ENCODE measurements at regions of chr12 and their contacts with region 1.

Region 1: GRCh38 chr12:93677195-93678064 is at the start of gene CRADD:
- DNase-seq: peak; percentile 75 to 97 (median 95)
- ATAC-seq: peak; percentile 95
- H3K4me3 ChIP-seq: peak within 1 kb of the TSS; percentile 93
- H3K4me3 Mint-ChIP-seq: peak within 1 kb of the TSS; percentile 82 to 100 (median 98)
- H3K27ac ChIP-seq: peak within 1 kb of the TSS; percentile 99
- H3K27ac Mint-ChIP-seq: peak within 1 kb of the TSS; percentile 97 to 100 (median 100)
- H3K4me1 ChIP-seq: peaks cover 5 to 9% of the 10 kb centered on the region in 2 donors
- H3K4me1 Mint-ChIP-seq: peaks cover 19 to 56% (median 41%) of the 10 kb centered on the region in 7 donors
- H3K27me3 ChIP-seq: no peaks in the 10 kb centered on the region
- H3K27me3 Mint-ChIP-seq: peaks cover 2 to 13% (median 9%) of the 10 kb centered on the region in 5 donors
- total RNA-seq, gene CRADD: 11.4 to 17.1 (median 13.8) TPM

Region 2: GRCh38 chr12:93441617-93442410 is 235.6 kb before region 1 on chr12 and contains the start of gene UBE2N:
- CTCF ChIA-PET with region 1: no interaction called
- POLR2A ChIA-PET with region 1: interaction called, 4 read pairs
- intact Hi-C with region 1: loop called (anchors 1 kb)
- DNase-seq: peak; percentile 96 to 98 (median 97)
- ATAC-seq: peak; percentile 95
- H3K4me3 ChIP-seq: peak within 1 kb of the TSS; percentile 66
- H3K4me3 Mint-ChIP-seq: peak within 1 kb of the TSS; percentile 89 to 100 (median 97)
- H3K27ac ChIP-seq: peak within 1 kb of the TSS; percentile 98
- H3K27ac Mint-ChIP-seq: peak within 1 kb of the TSS; percentile 96 to 100 (median 98)
- H3K4me1 ChIP-seq: peaks cover 35 to 48% of the 10 kb centered on the region in 2 donors
- H3K4me1 Mint-ChIP-seq: peaks cover 44 to 54% (median 49%) of the 10 kb centered on the region in 7 donors
- H3K27me3 ChIP-seq: no peaks in the 10 kb centered on the region
- H3K27me3 Mint-ChIP-seq: no peaks in the 10 kb centered on the region
- total RNA-seq, gene UBE2N: 76.6 to 180 (median 77.5) TPM

Region 3: DNA sequence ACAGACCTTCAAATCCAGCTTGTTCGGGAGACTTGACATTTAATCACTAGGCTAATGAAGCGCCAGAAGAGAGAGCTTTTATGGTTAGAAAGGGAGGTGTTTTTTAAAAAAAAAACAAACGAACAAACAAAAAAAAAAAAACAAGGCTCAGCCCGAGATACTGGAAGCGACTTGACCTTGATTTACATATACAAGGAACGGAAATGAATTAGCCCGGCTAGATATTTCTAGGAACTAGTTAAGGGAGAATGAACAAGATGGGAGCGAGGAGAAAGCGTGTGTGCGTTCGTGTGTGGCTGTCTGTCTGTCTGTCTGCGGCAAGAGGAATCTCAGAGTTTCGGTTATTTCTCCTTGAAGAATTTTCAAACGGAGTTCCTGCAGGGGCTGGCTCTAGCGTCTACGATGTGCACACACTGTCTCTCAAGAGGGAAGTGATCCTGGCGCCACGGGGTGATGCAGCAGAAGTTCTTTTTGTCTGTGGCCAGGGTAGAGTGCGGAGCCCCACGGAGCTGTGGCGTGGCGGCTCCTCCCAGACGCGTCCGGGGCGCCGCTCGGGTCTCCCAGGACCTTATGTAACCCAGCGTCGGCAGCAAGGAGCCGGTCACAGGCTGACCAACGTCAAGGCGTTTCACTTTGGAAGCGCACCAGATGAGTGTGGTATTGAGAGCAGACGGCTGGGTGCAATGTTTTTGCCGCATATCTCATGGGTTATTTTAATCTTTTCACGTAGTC is 86.1 kb before region 1 on chr12:
- CTCF ChIA-PET with region 1: no interaction called
- POLR2A ChIA-PET with region 1: no interaction called
- intact Hi-C with region 1: loop called (anchors 5 kb)
- DNase-seq: peak in 8 of 9 donors; percentile 13 to 41 (median 25)
- ATAC-seq: peak; percentile 95
- H3K4me3 ChIP-seq: peak overlapping the region; percentile 61
- H3K4me3 Mint-ChIP-seq: peak overlapping the region; percentile 78 to 93 (median 87)
- H3K27ac ChIP-seq: no peak overlapping the region
- H3K27ac Mint-ChIP-seq: peak overlapping the region in 1 of 9 donors; percentile 75
- H3K4me1 ChIP-seq: peaks cover 0 to 6% of the 10 kb centered on the region in 2 donors
- H3K4me1 Mint-ChIP-seq: peaks cover 14 to 42% (median 17%) of the 10 kb centered on the region in 7 donors
- H3K27me3 ChIP-seq: peaks cover 17 to 29% of the 10 kb centered on the region in 2 donors
- H3K27me3 Mint-ChIP-seq: peaks cover 42 to 58% (median 54%) of the 10 kb centered on the region in 5 donors

Region 4: DNA sequence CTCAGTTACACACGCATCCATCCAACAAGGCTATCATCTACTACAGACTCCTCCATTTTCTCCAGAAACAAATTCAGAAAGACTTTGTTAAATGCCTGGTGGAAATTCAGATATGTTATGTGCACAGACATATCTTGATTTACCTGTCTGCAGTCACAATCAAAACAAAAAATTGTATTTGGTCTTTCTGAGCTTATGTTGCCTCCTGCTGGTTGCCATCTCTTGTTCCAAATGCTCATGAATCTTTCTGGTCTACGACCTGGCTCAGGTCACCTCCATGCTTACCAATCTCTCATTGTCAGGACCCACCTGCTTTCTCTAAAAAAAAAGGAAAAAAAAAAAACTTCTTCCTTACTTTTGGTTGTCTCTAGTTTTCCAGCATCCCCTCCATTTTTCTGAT is 301.8 kb after region 1 on chr12:
- CTCF ChIA-PET with region 1: no interaction called
- POLR2A ChIA-PET with region 1: interaction called, 3 read pairs
- intact Hi-C with region 1: loop called in 1 of 2 experiments (anchors 1 kb)
- DNase-seq: peak in 4 of 9 donors; percentile 21 to 51 (median 31)
- ATAC-seq: peak; percentile 27
- H3K4me3 ChIP-seq: no peak overlapping the region
- H3K4me3 Mint-ChIP-seq: no peak overlapping the region
- H3K27ac ChIP-seq: no peak overlapping the region
- H3K27ac Mint-ChIP-seq: peak overlapping the region in 1 of 9 donors; percentile 27
- H3K4me1 ChIP-seq: no peaks in the 10 kb centered on the region
- H3K4me1 Mint-ChIP-seq: peaks cover 13 to 48% (median 30%) of the 10 kb centered on the region in 7 donors
- H3K27me3 ChIP-seq: no peaks in the 10 kb centered on the region
- H3K27me3 Mint-ChIP-seq: peaks cover 0 to 6% (median 0%) of the 10 kb centered on the region in 5 donors

Region 5: GRCh38 chr12:94101738-94102660 is 424.6 kb after region 1 on chr12:
- CTCF ChIA-PET with region 1: interaction called, 11 read pairs
- POLR2A ChIA-PET with region 1: interaction called, 7 read pairs
- intact Hi-C with region 1: loop called (anchors 1 kb)
- DNase-seq: peak; percentile 61 to 86 (median 82)
- ATAC-seq: peak; percentile 91
- H3K4me3 ChIP-seq: peak overlapping the region; percentile 77
- H3K4me3 Mint-ChIP-seq: peak overlapping the region; percentile 88 to 95 (median 90)
- H3K27ac ChIP-seq: peak overlapping the region; percentile 69
- H3K27ac Mint-ChIP-seq: peak overlapping the region; percentile 30 to 86 (median 76)
- H3K4me1 ChIP-seq: peaks cover 0 to 13% of the 10 kb centered on the region in 2 donors
- H3K4me1 Mint-ChIP-seq: peaks cover 11 to 30% (median 25%) of the 10 kb centered on the region in 7 donors
- H3K27me3 ChIP-seq: no peaks in the 10 kb centered on the region
- H3K27me3 Mint-ChIP-seq: peaks cover 0 to 19% (median 10%) of the 10 kb centered on the region in 5 donors

Region 6: GRCh38 chr12:94459728-94460615 is 782.5 kb after region 1 on chr12 and contains the start of gene CEP83:
- CTCF ChIA-PET with region 1: no interaction called
- POLR2A ChIA-PET with region 1: no interaction called
- intact Hi-C with region 1: loop called (anchors 1 kb)
- DNase-seq: peak; percentile 89 to 97 (median 94)
- ATAC-seq: peak; percentile 99
- H3K4me3 ChIP-seq: peak within 1 kb of the TSS; percentile 68
- H3K4me3 Mint-ChIP-seq: peak within 1 kb of the TSS; percentile 92 to 98 (median 96)
- H3K27ac ChIP-seq: peak within 1 kb of the TSS; percentile 91
- H3K27ac Mint-ChIP-seq: peak within 1 kb of the TSS; percentile 70 to 97 (median 94)
- H3K4me1 ChIP-seq: peaks cover 3 to 13% of the 10 kb centered on the region in 2 donors
- H3K4me1 Mint-ChIP-seq: peaks cover 10 to 38% (median 30%) of the 10 kb centered on the region in 7 donors
- H3K27me3 ChIP-seq: no peaks in the 10 kb centered on the region
- H3K27me3 Mint-ChIP-seq: peaks cover 0 to 12% (median 6%) of the 10 kb centered on the region in 5 donors
- total RNA-seq, gene CEP83: 12.8 to 22.7 (median 16.8) TPM

Region 7: DNA sequence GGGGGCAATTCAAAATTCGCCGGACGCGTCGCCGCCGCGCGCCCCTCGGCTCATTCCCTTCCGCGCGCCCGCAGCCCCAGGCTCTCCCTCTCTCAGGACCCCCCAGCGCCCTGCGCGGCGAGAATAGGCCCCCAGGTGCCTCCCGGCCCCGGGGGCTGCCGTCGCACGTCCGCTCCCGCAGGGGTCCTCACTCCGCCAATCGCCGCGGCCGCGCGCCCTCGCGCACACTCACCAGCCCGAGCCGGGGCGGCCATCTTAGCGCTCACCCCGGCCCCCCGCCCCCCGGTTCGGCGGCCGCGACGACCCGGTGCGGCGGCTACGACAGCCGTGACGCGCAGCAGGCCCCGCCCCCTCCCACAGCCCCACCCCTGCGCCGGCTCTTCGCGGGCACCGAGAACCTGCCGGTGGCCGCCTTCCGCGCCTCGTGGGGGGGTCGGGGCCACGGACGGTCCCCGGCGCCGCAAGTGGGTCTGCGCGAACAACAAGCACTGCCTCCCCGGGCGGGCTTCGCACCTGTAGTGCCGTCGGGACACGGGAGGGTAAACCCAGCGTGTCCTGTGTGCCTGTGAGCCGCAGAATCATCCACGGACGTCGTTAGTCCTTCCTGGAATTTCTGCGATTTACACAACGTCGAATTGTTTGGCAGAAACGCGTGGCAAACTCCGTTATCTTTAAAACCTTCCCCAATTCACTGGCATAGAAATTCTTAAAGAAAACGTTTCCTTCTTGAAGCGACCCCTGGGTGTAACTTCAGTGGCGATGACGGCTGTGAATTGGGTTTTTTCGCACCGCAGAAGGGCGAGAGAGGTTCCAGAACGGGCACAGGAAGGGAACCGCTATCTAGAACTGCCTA is 1871.3 kb after region 1 on chr12:
- CTCF ChIA-PET with region 1: no interaction called
- POLR2A ChIA-PET with region 1: no interaction called
- intact Hi-C with region 1: loop called in 1 of 2 experiments (anchors 10 kb)
- DNase-seq: peak; percentile 66 to 81 (median 77)
- ATAC-seq: peak; percentile 94
- H3K4me3 ChIP-seq: peak overlapping the region; percentile 75
- H3K4me3 Mint-ChIP-seq: peak overlapping the region; percentile 89 to 96 (median 94)
- H3K27ac ChIP-seq: peak overlapping the region; percentile 96
- H3K27ac Mint-ChIP-seq: peak overlapping the region; percentile 70 to 98 (median 94)
- H3K4me1 ChIP-seq: peaks cover 6 to 23% of the 10 kb centered on the region in 2 donors
- H3K4me1 Mint-ChIP-seq: peaks cover 36 to 73% (median 61%) of the 10 kb centered on the region in 7 donors
- H3K27me3 ChIP-seq: no peaks in the 10 kb centered on the region
- H3K27me3 Mint-ChIP-seq: peaks cover 0 to 22% (median 7%) of the 10 kb centered on the region in 5 donors